Activated naive CD4-positive, alpha-beta T cell treated with anti-CD3 and anti-CD28 coated beads for 36 hours (primary cell): ENCODE measurements at regions of chr3 and their contacts with region 1.

Region 1: DNA sequence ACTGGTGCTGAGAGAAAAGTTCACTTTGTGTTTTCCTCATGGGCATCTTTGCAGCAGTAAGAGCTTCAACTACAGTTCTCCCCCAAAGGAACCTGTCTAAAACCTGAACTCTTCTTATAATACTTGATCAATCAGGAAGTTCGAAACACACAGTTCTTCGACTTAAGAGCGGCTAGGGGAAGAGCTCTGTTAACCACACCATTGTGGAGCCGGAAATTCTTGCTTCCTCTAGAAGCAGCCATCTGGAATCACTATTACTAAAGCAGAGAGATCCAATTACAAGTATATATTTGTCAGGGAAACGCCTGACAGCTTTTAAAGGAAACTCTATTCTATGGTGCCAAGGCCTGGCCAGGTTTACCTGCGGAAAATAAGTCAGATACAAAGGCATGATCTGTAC is 337.3 kb upstream of the CBLB start:
- DNase-seq: peak; percentile 47
- H3K4me3 Mint-ChIP-seq: peak overlapping the region; percentile 55
- H3K27ac Mint-ChIP-seq: peak overlapping the region; percentile 98
- H3K4me1 Mint-ChIP-seq: peaks cover 55% of the 10 kb centered on the region
- H3K27me3 Mint-ChIP-seq: no peaks in the 10 kb centered on the region

Region 2: DNA sequence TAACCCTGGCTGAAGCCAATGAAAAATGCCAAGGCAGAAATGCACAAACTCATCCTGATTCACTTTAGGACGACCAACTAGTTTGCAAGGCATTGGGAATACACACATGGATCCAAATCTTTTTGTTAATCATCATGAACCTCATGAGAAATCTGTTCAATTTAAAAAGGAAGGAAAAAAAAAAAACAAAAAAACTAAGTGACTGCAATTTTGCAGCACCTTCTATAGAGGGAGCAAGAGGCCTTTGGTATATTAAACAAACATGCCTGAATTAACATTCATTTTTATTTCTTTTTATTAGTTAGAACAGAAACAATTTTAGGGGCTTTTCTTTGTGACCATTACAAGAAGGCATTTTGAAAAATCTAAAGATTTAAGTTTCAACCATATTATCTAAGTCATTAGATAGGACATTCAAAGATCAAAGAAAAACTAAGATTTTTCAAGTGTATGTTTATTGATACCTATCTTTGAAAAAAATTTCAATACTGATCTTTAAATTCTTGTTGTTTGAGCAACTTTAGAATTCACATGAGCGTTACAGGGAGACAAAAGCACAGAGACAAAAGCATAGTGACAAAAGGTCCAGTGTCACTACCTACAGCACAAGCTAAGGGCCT is 519.8 kb before region 1 on chr3:
- CTCF ChIA-PET with region 1: no interaction called
- intact Hi-C with region 1: loop called (anchors 1 kb)
- DNase-seq: no peak
- H3K4me3 Mint-ChIP-seq: no peak overlapping the region
- H3K27ac Mint-ChIP-seq: no peak overlapping the region
- H3K4me1 Mint-ChIP-seq: peaks cover 26% of the 10 kb centered on the region
- H3K27me3 Mint-ChIP-seq: no peaks in the 10 kb centered on the region

Region 3: GRCh38 chr3:105752744-105753415 is 453.3 kb before region 1 on chr3:
- CTCF ChIA-PET with region 1: no interaction called
- intact Hi-C with region 1: no loop called
- DNase-seq: peak; percentile 46
- H3K4me3 Mint-ChIP-seq: peak overlapping the region; percentile 42
- H3K27ac Mint-ChIP-seq: peak overlapping the region; percentile 92
- H3K4me1 Mint-ChIP-seq: peaks cover 77% of the 10 kb centered on the region
- H3K27me3 Mint-ChIP-seq: no peaks in the 10 kb centered on the region

Region 4: DNA sequence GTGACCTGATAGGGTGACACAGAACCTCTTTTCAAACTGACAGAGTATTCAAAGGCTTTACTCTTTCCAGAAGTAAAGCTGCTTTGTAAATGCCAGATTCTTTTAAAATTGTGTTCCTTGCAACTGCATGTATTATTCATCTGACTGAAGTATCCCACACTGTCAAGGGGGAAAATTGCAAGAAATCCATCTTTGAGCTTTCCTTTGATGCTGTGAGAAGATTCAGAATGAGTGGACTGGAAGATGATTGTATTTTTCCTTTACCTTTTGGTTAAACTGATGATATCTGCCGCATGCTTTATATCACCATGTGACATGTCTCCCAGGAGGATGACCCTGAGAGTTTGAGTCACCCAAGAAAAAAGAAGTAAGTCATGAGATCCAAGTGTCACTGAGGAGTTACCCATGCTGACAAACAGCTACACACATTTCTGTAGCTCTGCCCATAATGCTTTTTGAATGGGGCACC is 86.5 kb before region 1 on chr3:
- CTCF ChIA-PET with region 1: no interaction called
- intact Hi-C with region 1: loop called (anchors 1 kb)
- DNase-seq: peak; percentile 57
- H3K4me3 Mint-ChIP-seq: no peak overlapping the region
- H3K27ac Mint-ChIP-seq: peak overlapping the region; percentile 73
- H3K4me1 Mint-ChIP-seq: peaks cover 28% of the 10 kb centered on the region
- H3K27me3 Mint-ChIP-seq: no peaks in the 10 kb centered on the region

Region 5: DNA sequence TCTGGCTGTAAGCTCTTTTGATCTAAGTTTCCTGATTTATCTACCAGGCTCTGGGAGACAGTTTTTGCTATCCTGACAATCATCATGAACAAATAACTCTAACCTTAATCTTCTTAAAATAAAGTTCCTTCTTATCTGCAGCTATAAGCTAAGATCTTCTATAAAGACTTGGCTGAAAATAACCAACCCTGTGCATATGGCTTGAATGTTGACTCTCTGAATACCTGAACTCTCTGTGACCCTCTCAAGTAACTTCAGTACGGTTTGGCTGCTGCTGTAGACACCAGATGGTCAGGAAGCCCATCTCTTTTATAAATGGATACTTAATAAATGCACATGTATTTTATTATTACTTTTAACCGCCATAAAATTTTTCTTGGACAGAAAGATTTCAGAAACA is 75.1 kb after region 1 on chr3:
- CTCF ChIA-PET with region 1: no interaction called
- intact Hi-C with region 1: no loop called
- DNase-seq: no peak
- H3K4me3 Mint-ChIP-seq: no peak overlapping the region
- H3K27ac Mint-ChIP-seq: no peak overlapping the region
- H3K4me1 Mint-ChIP-seq: peaks cover 8% of the 10 kb centered on the region
- H3K27me3 Mint-ChIP-seq: no peaks in the 10 kb centered on the region

Region 6: DNA sequence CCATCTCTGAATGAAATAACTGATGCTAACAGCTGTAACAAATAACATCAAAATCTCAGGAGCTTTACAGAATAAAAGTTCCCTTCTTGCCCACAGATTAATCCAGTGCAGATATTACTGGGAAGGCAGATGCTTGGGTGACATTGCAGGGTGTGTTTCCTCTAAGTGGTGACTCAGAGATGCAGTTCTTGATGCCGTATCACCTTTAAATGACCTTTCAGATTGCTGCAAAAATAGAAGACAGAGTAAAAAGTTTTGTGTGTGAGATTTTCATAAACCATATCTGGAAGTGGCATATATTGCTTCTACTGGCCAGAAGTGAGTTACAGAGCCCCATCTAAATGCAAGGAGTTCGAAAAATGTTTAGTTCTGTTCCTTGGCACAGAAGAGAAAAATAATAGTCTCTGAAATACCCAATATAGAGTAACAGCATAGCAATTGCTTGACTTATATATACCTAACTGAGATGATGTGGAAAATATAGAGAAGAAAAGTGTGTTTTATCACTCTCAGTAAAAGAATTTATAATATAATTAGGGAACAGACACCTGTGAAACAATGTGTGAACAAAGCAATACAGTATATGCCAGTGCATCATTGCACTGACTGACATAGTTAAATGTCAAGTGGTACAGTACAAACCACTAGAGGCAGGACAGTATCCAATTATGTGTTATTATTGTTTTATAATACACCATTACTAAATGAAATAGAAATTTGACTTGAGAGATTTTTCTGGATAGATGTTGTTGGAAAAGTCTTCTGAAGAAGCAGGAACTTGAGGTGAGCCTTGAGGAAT is 93.4 kb after region 1 on chr3:
- CTCF ChIA-PET with region 1: no interaction called
- intact Hi-C with region 1: loop called (anchors 1 kb)
- DNase-seq: peak; percentile 46
- H3K4me3 Mint-ChIP-seq: no peak overlapping the region
- H3K27ac Mint-ChIP-seq: peak overlapping the region; percentile 40
- H3K4me1 Mint-ChIP-seq: peaks cover 54% of the 10 kb centered on the region
- H3K27me3 Mint-ChIP-seq: no peaks in the 10 kb centered on the region